Activated T-helper 2 cell treated with anti-CD3 and anti-CD28 coated beads, Interferon-gamma antibody, Interleukin-2, Interleukin-4, amounts not matched to agents 10 μg/mL and 5 μg/mL and 100 μg/mL, durations not matched to agents 14 hours and 24 hours and 36 hours (primary cell): ENCODE measurements at regions of chr5 and their contacts with region 1.

Region 1: GRCh38 chr5:159987031-159987674 is 21.8 kb upstream of the TTC1 start:
- DNase-seq: peak; percentile 54
- H3K4me3 Mint-ChIP-seq: no peak overlapping the region
- H3K27ac Mint-ChIP-seq: no peak overlapping the region
- H3K4me1 Mint-ChIP-seq: no peaks in the 10 kb centered on the region
- H3K27me3 Mint-ChIP-seq: peaks cover 63% of the 10 kb centered on the region

Region 2: DNA sequence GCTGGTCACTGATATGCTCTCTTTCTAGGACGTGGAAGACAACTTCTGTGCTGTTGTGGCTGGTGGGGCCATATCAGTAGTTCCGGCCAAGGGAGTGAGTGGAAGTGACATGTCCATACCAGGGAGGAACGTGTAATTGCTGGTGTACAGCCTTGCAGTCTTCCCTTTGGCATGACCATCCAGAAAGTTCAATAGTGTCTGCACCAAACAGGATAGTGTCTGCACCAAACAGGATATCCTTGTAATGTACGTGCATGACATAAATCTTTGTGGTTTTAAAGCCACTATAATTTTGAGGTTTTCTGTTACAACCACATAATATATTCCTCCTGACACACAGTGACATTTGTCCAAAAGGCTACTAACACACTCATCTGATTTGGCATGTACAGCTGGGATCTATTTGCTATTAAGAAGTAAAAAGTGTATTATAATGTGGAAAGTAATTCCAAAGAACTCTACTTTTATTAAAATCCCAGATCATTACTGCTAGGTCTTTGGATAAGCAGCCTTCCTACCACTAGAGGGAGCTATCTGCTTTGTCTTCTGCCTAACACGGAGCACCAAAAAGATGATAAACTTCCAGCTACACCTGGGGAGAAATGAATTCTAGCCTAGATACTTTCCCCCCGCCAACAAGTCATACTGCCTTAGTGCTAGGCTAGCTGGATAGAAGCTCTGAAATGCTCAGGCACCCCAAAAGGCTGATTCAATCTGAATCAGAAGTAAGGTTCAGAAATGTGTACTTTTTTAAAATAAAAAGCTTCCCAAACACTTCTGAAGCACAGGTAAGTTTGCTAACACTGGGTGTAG is 830.5 kb before region 1 on chr5:
- intact Hi-C with region 1: loop called (anchors 10 kb)
- DNase-seq: no peak
- H3K4me3 Mint-ChIP-seq: no peak overlapping the region
- H3K27ac Mint-ChIP-seq: no peak overlapping the region
- H3K4me1 Mint-ChIP-seq: peaks cover 29% of the 10 kb centered on the region
- H3K27me3 Mint-ChIP-seq: peaks cover 1% of the 10 kb centered on the region

Region 3: GRCh38 chr5:159286420-159287035 is 700.6 kb before region 1 on chr5:
- intact Hi-C with region 1: loop called (anchors 2 kb)
- DNase-seq: no peak
- H3K4me3 Mint-ChIP-seq: no peak overlapping the region
- H3K27ac Mint-ChIP-seq: no peak overlapping the region
- H3K4me1 Mint-ChIP-seq: no peaks in the 10 kb centered on the region
- H3K27me3 Mint-ChIP-seq: peaks cover 5% of the 10 kb centered on the region

Region 4: DNA sequence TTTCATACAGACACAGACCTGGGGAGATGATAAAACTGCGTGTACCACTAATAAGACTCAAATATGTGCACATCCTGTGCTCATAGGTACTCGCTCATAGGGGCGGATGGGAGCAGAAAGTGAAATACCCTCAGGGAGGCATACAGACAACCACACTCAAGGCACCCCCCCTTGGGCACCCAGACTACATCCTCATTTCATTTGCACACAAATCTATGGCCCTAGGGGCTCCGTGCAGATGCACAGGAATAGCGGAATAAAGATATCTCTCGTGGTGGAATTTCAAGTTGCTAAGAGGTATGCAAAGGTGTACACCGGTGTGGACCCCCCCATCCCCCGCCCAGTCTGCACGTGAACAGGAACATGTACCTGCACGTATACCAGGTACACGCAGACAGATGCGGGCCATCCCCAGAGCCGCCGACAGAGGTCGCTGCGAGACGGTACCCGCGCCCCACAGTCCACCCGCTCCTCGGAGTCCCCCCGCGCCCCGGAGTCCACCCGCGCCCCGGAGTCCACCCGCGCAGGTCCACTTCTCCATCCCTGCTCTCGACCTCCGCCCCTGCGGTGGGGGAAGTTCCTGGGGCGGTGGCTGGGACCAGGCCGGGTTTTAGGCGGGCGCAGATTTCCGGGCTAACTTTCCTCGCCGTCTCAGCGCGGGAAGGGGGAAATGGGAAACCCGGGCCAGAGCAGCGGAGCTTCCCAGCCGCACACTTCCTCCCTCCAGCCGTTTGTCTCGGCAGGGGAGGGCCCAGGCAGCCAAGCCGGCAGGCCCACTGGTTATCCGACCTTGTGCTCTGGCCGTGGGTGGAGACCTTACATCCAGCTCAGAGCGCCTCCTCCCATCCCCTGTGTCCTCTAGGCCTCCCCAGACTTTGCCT is 655.8 kb before region 1 on chr5:
- intact Hi-C with region 1: loop called (anchors 5 kb)
- DNase-seq: peak; percentile 64
- H3K4me3 Mint-ChIP-seq: peak overlapping the region; percentile 54
- H3K27ac Mint-ChIP-seq: no peak overlapping the region
- H3K4me1 Mint-ChIP-seq: peaks cover 29% of the 10 kb centered on the region
- H3K27me3 Mint-ChIP-seq: peaks cover 41% of the 10 kb centered on the region

Region 5: GRCh38 chr5:159444441-159445082 is 542.6 kb before region 1 on chr5:
- intact Hi-C with region 1: loop called (anchors 5 kb)
- DNase-seq: no peak
- H3K4me3 Mint-ChIP-seq: no peak overlapping the region
- H3K27ac Mint-ChIP-seq: no peak overlapping the region
- H3K4me1 Mint-ChIP-seq: no peaks in the 10 kb centered on the region
- H3K27me3 Mint-ChIP-seq: peaks cover 54% of the 10 kb centered on the region

Region 6: DNA sequence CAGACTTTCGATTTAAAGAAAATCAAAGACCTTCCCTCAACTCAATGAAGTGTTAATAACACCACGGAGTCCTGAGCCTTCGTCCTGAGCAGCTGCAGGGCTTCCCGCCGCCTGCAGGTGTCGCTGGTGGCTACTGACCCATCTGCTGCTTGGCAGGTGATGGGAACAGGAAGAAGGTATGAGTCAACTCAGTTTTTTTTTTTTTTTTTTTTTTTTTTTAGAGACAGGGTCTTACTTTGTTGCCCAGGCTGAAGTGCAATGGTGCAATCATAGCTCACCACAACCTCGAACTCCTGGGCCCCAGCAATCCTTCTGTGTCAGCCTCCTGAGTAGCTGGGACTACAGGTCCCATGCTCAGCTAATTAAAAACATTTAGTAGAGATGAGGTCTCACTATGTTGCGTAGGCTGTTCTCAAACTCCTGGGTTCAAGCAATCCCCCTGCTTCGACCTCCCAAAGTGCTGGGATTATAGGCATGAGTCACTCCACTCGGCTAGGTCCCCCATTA is 471.2 kb before region 1 on chr5:
- intact Hi-C with region 1: loop called (anchors 2 kb)
- DNase-seq: peak; percentile 50
- H3K4me3 Mint-ChIP-seq: no peak overlapping the region
- H3K27ac Mint-ChIP-seq: no peak overlapping the region
- H3K4me1 Mint-ChIP-seq: peaks cover 7% of the 10 kb centered on the region
- H3K27me3 Mint-ChIP-seq: peaks cover 14% of the 10 kb centered on the region

Region 7: DNA sequence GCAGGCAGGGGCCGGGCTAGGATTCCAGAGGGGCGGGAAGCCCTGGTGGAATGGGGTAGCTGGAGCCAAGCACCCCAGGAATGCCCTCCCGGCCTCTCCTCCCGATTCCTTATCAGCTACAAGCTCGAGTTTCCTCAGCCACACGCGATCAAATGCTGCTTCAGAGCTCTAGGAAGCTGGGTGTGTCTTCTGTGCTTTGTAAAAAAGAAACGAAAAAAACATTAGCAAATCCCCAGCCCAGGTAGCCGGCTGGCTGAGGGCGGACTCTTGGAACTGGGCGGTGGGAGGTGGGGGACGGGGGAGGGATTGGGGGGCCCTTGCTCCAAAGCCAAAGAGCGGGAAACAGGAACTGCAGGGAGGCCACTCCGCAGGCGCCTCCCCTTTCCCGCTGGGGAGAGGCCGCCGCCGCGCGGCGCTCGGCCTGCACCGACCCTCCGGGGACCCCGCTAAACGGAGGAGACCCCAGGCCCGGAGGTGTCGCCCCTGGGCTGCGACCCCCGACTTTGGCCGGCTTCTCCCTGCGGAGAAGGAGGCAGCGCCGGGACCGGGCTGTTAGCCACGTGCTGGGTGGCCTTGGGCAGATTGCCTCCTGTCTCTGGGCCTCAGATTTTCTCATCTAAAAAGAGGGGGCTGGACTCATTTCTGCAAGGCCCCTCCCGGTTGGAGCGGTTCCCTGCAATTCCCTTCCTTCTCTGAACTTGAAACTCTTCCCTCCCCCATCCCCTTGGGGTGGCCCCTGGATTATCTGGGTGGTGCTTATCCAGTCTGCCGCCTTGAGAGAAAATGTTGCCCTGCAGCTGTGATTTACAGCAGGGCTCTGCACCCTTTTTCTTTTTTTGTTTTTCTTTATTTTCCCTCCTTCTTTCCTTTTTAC is 201.2 kb after region 1 on chr5:
- intact Hi-C with region 1: no loop called
- DNase-seq: no peak
- H3K4me3 Mint-ChIP-seq: no peak overlapping the region
- H3K27ac Mint-ChIP-seq: no peak overlapping the region
- H3K4me1 Mint-ChIP-seq: peaks cover 3% of the 10 kb centered on the region
- H3K27me3 Mint-ChIP-seq: peaks cover 4% of the 10 kb centered on the region